Mammary epithelial cell (primary cell): ENCODE measurements at regions of chr2 and their contacts with region 1.

Region 1: GRCh38 chr2:14634201-14634884 is 1.8 kb downstream of the LRATD1 start:
- DNase-seq: peak; percentile 86
- H3K4me3 ChIP-seq: peak overlapping the region; percentile 59 to 83 (median 66)
- H3K27ac ChIP-seq: peak overlapping the region; percentile 50
- H3K4me1 ChIP-seq: peaks cover 46% of the 10 kb centered on the region
- H3K27me3 ChIP-seq: no peaks in the 10 kb centered on the region
- CTCF ChIP-seq: peak; percentile 66 to 90

Region 2: DNA sequence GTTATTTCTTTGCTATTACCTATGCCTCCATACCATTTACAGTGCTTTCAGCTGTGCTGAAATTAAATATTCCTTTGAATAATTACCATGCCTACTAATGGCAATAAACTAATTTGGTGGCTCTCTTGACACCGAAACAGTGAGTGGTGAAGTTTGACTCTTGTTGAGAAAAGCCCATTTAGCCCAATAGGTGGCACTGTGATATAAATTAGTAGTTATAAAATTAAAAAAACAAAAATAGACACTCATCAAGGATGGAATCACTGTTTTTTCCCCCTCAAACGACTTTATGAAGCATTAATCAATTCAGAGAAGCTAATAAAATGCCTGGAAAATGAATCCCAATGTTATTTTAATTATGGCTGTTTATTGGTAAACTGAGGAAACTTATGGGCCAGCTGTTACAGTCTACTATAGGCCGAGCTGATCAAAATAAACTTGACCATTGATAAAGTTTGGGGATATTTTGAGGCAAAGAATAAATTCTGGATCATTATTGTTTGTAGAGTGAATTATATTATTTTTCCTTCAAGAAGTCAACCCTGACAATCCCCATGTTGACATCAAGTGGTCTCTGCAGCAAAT is 1578.0 kb before region 1 on chr2:
- CTCF ChIA-PET with region 1: no interaction called
- dilution Hi-C with region 1: no loop called
- in situ Hi-C with region 1: no loop called
- intact Hi-C with region 1: loop called (anchors 10 kb)
- DNase-seq: no peak
- H3K4me3 ChIP-seq: no peak overlapping the region
- H3K27ac ChIP-seq: no peak overlapping the region
- H3K4me1 ChIP-seq: peaks cover 3% of the 10 kb centered on the region
- H3K27me3 ChIP-seq: peaks cover 1% of the 10 kb centered on the region
- CTCF ChIP-seq: peak; percentile 49 to 65

Region 3: DNA sequence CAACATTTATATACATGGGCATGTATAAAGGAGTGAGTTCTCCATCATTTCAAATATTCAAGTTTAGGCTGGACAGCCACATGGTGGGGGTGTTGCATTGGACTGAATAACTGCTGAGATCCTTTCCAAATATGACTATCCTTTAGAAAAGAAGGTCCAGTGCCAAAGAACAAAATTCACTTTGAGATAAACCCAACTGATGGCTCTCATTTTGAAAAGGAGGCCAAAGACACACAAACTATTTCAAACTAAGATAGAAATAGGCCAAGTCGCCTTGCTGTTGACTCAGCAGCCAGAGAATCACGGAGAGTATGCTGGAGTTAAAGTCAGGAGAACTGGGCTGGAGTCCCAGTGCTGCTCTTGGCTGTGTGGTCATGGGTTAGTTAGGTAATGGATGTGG is 206.3 kb before region 1 on chr2:
- CTCF ChIA-PET with region 1: interaction called, 7 read pairs
- dilution Hi-C with region 1: no loop called
- in situ Hi-C with region 1: no loop called
- intact Hi-C with region 1: loop called (anchors 1 kb)
- DNase-seq: peak; percentile 64
- H3K4me3 ChIP-seq: no peak overlapping the region
- H3K27ac ChIP-seq: no peak overlapping the region
- H3K4me1 ChIP-seq: no peaks in the 10 kb centered on the region
- H3K27me3 ChIP-seq: no peaks in the 10 kb centered on the region
- CTCF ChIP-seq: peak in 1 of 2 donors; percentile 53

Region 4: GRCh38 chr2:14516844-14517243 is 117.5 kb before region 1 on chr2:
- CTCF ChIA-PET with region 1: no interaction called
- dilution Hi-C with region 1: no loop called
- in situ Hi-C with region 1: no loop called
- intact Hi-C with region 1: loop called (anchors 2 kb)
- DNase-seq: peak; percentile 89
- H3K4me3 ChIP-seq: no peak overlapping the region
- H3K27ac ChIP-seq: peak overlapping the region; percentile 30
- H3K4me1 ChIP-seq: peaks cover 19% of the 10 kb centered on the region
- H3K27me3 ChIP-seq: no peaks in the 10 kb centered on the region
- CTCF ChIP-seq: no peak

Region 5: GRCh38 chr2:14831458-14831857 is 197.1 kb after region 1 on chr2:
- CTCF ChIA-PET with region 1: interaction called, 4 read pairs
- dilution Hi-C with region 1: no loop called
- in situ Hi-C with region 1: no loop called
- intact Hi-C with region 1: loop called (anchors 5 kb)
- DNase-seq: peak; percentile 11
- H3K4me3 ChIP-seq: no peak overlapping the region
- H3K27ac ChIP-seq: no peak overlapping the region
- H3K4me1 ChIP-seq: peaks cover 4% of the 10 kb centered on the region
- H3K27me3 ChIP-seq: no peaks in the 10 kb centered on the region
- CTCF ChIP-seq: peak; percentile 16 to 47

Region 6: GRCh38 chr2:15591692-15592463 is 957.5 kb after region 1 on chr2 and contains the start of gene DDX1:
- CTCF ChIA-PET with region 1: no interaction called
- dilution Hi-C with region 1: no loop called
- in situ Hi-C with region 1: no loop called
- intact Hi-C with region 1: loop called (anchors 1 kb)
- DNase-seq: peak; percentile 84
- H3K4me3 ChIP-seq: peak within 1 kb of the TSS; percentile 87 to 95 (median 87)
- H3K27ac ChIP-seq: peak within 1 kb of the TSS; percentile 79
- H3K4me1 ChIP-seq: peaks cover 6% of the 10 kb centered on the region
- H3K27me3 ChIP-seq: no peaks in the 10 kb centered on the region
- CTCF ChIP-seq: no peak
- total RNA-seq, gene DDX1: 47.2 to 107 TPM